ENCODE measurements at regions of chr4 and their contacts with region 1.

Region 1: DNA sequence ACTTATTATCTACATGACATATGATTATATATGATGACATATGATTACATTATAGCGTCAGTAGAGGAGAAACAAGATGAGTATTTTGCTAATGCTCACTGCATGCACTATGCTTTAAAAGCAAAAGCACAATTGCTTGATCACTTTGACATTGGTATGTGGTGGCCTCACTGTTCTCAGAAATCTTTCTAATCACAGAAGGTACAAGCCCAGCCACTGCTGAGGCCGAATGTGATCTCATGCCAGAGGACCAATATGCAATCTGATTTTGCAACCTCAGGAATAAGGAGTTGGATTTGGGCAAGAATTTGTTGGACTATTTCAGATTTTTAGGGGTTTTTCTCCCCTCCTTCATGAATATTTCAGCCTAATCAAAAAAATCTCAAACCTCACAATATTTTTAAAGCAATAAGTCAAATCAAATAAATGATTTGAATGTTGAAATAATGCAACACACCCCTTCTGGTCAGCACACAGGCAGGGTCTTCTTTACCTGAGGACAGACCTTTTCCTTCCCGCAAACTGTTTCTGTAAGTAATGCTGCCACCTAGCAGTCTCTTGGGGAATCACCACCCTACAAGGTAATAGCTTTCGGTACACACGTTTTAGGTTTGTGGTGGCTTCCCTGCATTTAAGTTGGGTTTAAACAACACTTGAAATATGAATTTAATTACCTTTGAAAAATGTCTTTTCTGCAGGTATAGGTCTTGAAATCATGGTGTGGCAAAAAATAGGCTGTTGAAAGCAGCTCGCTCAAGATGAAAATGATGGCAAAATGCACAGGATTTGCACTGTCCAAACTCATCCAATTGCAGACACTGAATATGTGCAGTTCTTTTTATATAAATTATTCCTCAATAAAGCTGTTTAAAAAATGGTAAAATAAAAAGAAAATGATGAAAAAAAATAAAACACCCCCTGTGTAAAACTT is 4.8 kb upstream of the CXCL13 start:
- DNase-seq: no peak
- ATAC-seq: peak; percentile 47
- H3K4me3 Mint-ChIP-seq: no peak overlapping the region
- H3K27ac Mint-ChIP-seq: no peak overlapping the region
- H3K4me1 Mint-ChIP-seq: no peaks in the 10 kb centered on the region
- H3K27me3 Mint-ChIP-seq: peaks cover 4% of the 10 kb centered on the region
- CTCF ChIP-seq: peak; percentile 53

Region 2: DNA sequence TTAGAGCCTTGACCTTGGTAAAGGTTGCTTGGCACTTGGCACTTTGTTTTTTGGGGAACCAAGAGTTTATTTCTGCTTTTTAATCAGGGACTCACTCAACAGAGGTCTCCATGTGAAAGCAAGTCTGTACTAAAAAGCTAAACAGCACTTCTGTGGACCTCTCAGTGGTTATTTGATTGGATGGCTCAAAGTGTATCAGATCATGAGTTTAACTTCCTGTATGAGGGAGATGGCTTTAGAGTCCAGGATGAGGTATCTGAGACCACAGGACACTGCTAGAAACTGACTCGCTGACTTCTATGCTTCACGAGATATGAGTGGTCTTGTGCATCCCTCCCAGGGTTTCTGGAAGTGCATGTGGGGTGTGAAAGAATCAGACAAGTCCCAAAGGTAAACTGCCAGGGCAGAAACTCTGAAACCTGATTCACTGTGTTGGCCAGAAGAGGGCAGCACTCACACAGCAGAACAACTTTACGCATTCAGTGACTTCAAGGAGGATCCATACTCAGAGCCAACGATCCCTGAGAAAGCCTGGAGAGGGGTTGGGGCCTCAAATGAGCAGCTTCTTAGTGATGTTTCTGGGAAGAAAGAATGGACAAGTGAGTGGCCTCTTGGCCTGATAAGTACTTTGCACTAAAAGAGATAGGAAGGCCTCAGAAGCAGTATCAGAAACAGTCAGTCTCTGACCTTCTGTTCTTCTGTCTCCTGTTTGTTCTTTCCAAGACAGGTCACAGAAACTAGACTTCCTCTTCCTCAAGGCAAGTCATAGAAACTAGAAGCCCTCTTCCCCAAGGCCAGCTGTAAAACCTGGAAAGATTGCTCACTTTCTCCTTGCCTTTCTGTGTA is 215.4 kb before region 1 on chr4:
- CTCF ChIA-PET with region 1: interaction called, 86 read pairs
- POLR2A ChIA-PET with region 1: no interaction called
- intact Hi-C with region 1: loop called (anchors 1 kb)
- DNase-seq: peak; percentile 36
- ATAC-seq: peak; percentile 47
- H3K4me3 Mint-ChIP-seq: no peak overlapping the region
- H3K27ac Mint-ChIP-seq: no peak overlapping the region
- H3K4me1 Mint-ChIP-seq: no peaks in the 10 kb centered on the region
- H3K27me3 Mint-ChIP-seq: no peaks in the 10 kb centered on the region
- CTCF ChIP-seq: no peak

Region 3: GRCh38 chr4:77465271-77465670 is 135.5 kb before region 1 on chr4:
- CTCF ChIA-PET with region 1: interaction called, 84 read pairs
- POLR2A ChIA-PET with region 1: no interaction called
- intact Hi-C with region 1: loop called (anchors 1 kb)
- DNase-seq: no peak
- ATAC-seq: no peak
- H3K4me3 Mint-ChIP-seq: no peak overlapping the region
- H3K27ac Mint-ChIP-seq: no peak overlapping the region
- H3K4me1 Mint-ChIP-seq: no peaks in the 10 kb centered on the region
- H3K27me3 Mint-ChIP-seq: peaks cover 4% of the 10 kb centered on the region
- CTCF ChIP-seq: no peak